ENCODE measurements at regions of chrX and their contacts with region 1.

Region 1: DNA sequence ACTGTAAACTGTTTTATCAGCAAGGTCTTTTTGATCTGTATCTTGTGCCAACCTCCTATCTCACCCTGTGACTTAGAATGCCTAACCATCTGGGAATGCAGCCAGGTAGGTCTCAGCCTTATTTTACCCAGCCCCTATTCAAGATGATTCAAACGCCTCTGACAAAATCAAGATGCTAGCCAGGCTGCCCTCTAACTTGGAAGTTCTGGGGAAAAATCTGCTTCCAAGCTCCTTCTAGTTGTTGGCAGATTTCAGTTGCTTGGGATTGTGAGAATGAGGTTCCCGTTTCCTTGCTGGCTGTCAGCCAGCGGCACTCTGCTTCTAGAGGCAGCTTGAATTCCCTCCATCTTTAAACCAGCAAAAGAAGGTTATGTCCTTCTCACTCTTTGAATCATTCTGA is 34.7 kb downstream of the LUZP4 start:
- DNase-seq: peak; percentile 48 to 61
- H3K4me3 ChIP-seq: no peak overlapping the region
- H3K27ac ChIP-seq: no peak overlapping the region
- H3K4me1 ChIP-seq: no peaks in the 10 kb centered on the region
- H3K27me3 ChIP-seq: no peaks in the 10 kb centered on the region
- CTCF ChIP-seq: no peak
- POLR2A ChIP-seq: no peak

Region 2: GRCh38 chrX:115650916-115651315 is 326.7 kb after region 1 on chrX:
- intact Hi-C with region 1: loop called (anchors 10 kb)
- DNase-seq: peak; percentile 8 to 13
- H3K4me3 ChIP-seq: no peak overlapping the region
- H3K27ac ChIP-seq: no peak overlapping the region
- H3K4me1 ChIP-seq: no peaks in the 10 kb centered on the region
- H3K27me3 ChIP-seq: no peaks in the 10 kb centered on the region
- CTCF ChIP-seq: peak in 3 of 6 experiments; percentile 12 to 53 (median 37)
- POLR2A ChIP-seq: no peak

Region 3: GRCh38 chrX:115689931-115690330 is 365.7 kb after region 1 on chrX:
- intact Hi-C with region 1: loop called (anchors 10 kb)
- DNase-seq: peak in 1 of 2 donors; percentile 1
- H3K4me3 ChIP-seq: no peak overlapping the region
- H3K27ac ChIP-seq: peak overlapping the region; percentile 57 to 84 (median 74)
- H3K4me1 ChIP-seq: no peaks in the 10 kb centered on the region
- H3K27me3 ChIP-seq: no peaks in the 10 kb centered on the region
- CTCF ChIP-seq: no peak
- POLR2A ChIP-seq: no peak

Measured in thyroid gland (tissue), 4 donors.